GM12878 (cell line): ENCODE measurements at regions of chr5 and their contacts with region 1.

Region 1: GRCh38 chr5:163408311-163408923 is 29.0 kb upstream of the CCNG1 start:
- DNase-seq: peak; percentile 25
- ATAC-seq: peak; percentile 91
- H3K4me3 ChIP-seq: no peak overlapping the region
- H3K27ac ChIP-seq: no peak overlapping the region
- H3K4me1 ChIP-seq: peaks cover 5% of the 10 kb centered on the region
- H3K27me3 ChIP-seq: no peaks in the 10 kb centered on the region; a peak in 1 of 4 replicates
- CTCF ChIP-seq: peak; percentile 73 to 87 (median 85)
- EP300 ChIP-seq: no peak
- POLR2A ChIP-seq: no peak
- RAD21 ChIP-seq: peak; percentile 96

Region 2: GRCh38 chr5:161544350-161544765 is 1864.1 kb before region 1 on chr5:
- CTCF ChIA-PET with region 1: interaction called, 36 read pairs
- POLR2A ChIA-PET with region 1: no interaction called
- RAD21 ChIA-PET with region 1: interaction called, 8 read pairs
- SMC1A ChIA-PET with region 1: interaction called, 19 read pairs
- in situ Hi-C with region 1: no loop called
- intact Hi-C with region 1: loop called (anchors 5 kb)
- DNase-seq: no peak
- ATAC-seq: peak; percentile 66
- H3K4me3 ChIP-seq: no peak overlapping the region
- H3K27ac ChIP-seq: no peak overlapping the region
- H3K4me1 ChIP-seq: no peaks in the 10 kb centered on the region
- H3K27me3 ChIP-seq: peaks cover 3 to 8% of the 10 kb centered on the region in 2 experiments; a peak in 2 of 4 replicates
- CTCF ChIP-seq: peak; percentile 75 to 94 (median 90)
- EP300 ChIP-seq: no peak
- POLR2A ChIP-seq: no peak
- RAD21 ChIP-seq: peak; percentile 64

Region 3: GRCh38 chr5:161966564-161966963 is 1441.9 kb before region 1 on chr5:
- CTCF ChIA-PET with region 1: interaction called, 11 read pairs
- POLR2A ChIA-PET with region 1: no interaction called
- RAD21 ChIA-PET with region 1: interaction called, 12 read pairs
- SMC1A ChIA-PET with region 1: interaction called, 15 read pairs
- in situ Hi-C with region 1: no loop called
- intact Hi-C with region 1: loop called (anchors 5 kb)
- DNase-seq: no peak
- ATAC-seq: peak; percentile 71
- H3K4me3 ChIP-seq: no peak overlapping the region
- H3K27ac ChIP-seq: no peak overlapping the region
- H3K4me1 ChIP-seq: no peaks in the 10 kb centered on the region
- H3K27me3 ChIP-seq: no peaks in the 10 kb centered on the region
- CTCF ChIP-seq: peak; percentile 20 to 48 (median 44); a peak in 4 of 6 replicates
- EP300 ChIP-seq: no peak
- POLR2A ChIP-seq: no peak
- RAD21 ChIP-seq: peak; percentile 38

Region 4: DNA sequence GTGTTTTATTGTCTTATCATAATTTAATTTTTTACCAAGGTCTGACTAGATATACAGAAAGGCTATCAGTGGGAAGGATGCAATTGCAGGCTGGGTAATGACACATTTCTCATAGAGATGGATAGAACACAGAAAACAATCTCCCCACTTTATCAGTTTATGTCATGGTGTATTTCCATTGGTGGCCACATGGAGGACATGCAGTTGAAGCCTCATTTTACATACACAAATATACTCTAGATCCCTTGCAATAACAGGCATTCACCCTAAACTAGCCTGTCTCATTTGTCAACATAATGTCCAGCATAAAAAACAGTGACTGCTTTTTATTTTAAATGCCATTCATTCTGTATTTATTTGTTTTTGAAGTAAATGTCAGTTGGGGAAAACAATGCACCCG is 814.5 kb before region 1 on chr5:
- CTCF ChIA-PET with region 1: no interaction called
- POLR2A ChIA-PET with region 1: no interaction called
- RAD21 ChIA-PET with region 1: no interaction called
- SMC1A ChIA-PET with region 1: interaction called, 3 read pairs
- in situ Hi-C with region 1: no loop called
- intact Hi-C with region 1: loop called (anchors 5 kb)
- DNase-seq: no peak
- ATAC-seq: peak; percentile 68
- H3K4me3 ChIP-seq: no peak overlapping the region
- H3K27ac ChIP-seq: no peak overlapping the region
- H3K4me1 ChIP-seq: no peaks in the 10 kb centered on the region
- H3K27me3 ChIP-seq: no peaks in the 10 kb centered on the region
- CTCF ChIP-seq: peak; percentile 27 to 36 (median 29); a peak in 3 of 6 replicates
- EP300 ChIP-seq: no peak
- POLR2A ChIP-seq: no peak
- RAD21 ChIP-seq: peak; percentile 32; the same call in 1 of the 2 replicates

Region 5: GRCh38 chr5:163306421-163306820 is 102.0 kb before region 1 on chr5:
- CTCF ChIA-PET with region 1: interaction called, 26 read pairs
- POLR2A ChIA-PET with region 1: no interaction called
- RAD21 ChIA-PET with region 1: interaction called, 8 read pairs
- SMC1A ChIA-PET with region 1: interaction called, 13 read pairs
- in situ Hi-C with region 1: no loop called
- intact Hi-C with region 1: loop called (anchors 1 kb)
- DNase-seq: no peak
- ATAC-seq: peak; percentile 46; the same call in 2 of the 3 replicates
- H3K4me3 ChIP-seq: no peak overlapping the region
- H3K27ac ChIP-seq: no peak overlapping the region
- H3K4me1 ChIP-seq: no peaks in the 10 kb centered on the region
- H3K27me3 ChIP-seq: no peaks in the 10 kb centered on the region
- CTCF ChIP-seq: peak; percentile 31 to 37 (median 35); a peak in 4 of 6 replicates
- EP300 ChIP-seq: no peak
- POLR2A ChIP-seq: no peak
- RAD21 ChIP-seq: peak; percentile 30; the same call in 1 of the 2 replicates

Region 6: GRCh38 chr5:163437309-163438182 is 29.1 kb after region 1 on chr5 and contains the start of gene CCNG1:
- CTCF ChIA-PET with region 1: interaction called, 7 read pairs
- POLR2A ChIA-PET with region 1: no interaction called
- RAD21 ChIA-PET with region 1: interaction called, 7 read pairs
- SMC1A ChIA-PET with region 1: interaction called, 13 read pairs
- in situ Hi-C with region 1: no loop called
- intact Hi-C with region 1: no loop called
- DNase-seq: peak; percentile 88
- ATAC-seq: peak; percentile 95
- H3K4me3 ChIP-seq: peak within 1 kb of the TSS; percentile 93
- H3K27ac ChIP-seq: peak within 1 kb of the TSS; percentile 86
- H3K4me1 ChIP-seq: no peaks in the 10 kb centered on the region; the same call in 1 of the 2 replicates
- H3K27me3 ChIP-seq: no peaks in the 10 kb centered on the region
- CTCF ChIP-seq: no peak
- EP300 ChIP-seq: no peak
- POLR2A ChIP-seq: peak; percentile 100
- RAD21 ChIP-seq: no peak
- polyA plus RNA-seq, gene CCNG1: 200 to 274 TPM

Region 7: GRCh38 chr5:163789870-163790269 is 381.5 kb after region 1 on chr5:
- CTCF ChIA-PET with region 1: no interaction called
- POLR2A ChIA-PET with region 1: no interaction called
- RAD21 ChIA-PET with region 1: no interaction called
- SMC1A ChIA-PET with region 1: no interaction called
- in situ Hi-C with region 1: no loop called
- intact Hi-C with region 1: no loop called
- DNase-seq: no peak
- ATAC-seq: no peak
- H3K4me3 ChIP-seq: no peak overlapping the region
- H3K27ac ChIP-seq: no peak overlapping the region
- H3K4me1 ChIP-seq: no peaks in the 10 kb centered on the region
- H3K27me3 ChIP-seq: no peaks in the 10 kb centered on the region
- CTCF ChIP-seq: no peak
- EP300 ChIP-seq: no peak
- POLR2A ChIP-seq: no peak
- RAD21 ChIP-seq: no peak